ENCODE measurements at regions of chr9 and their contacts with region 1.

Region 1: DNA sequence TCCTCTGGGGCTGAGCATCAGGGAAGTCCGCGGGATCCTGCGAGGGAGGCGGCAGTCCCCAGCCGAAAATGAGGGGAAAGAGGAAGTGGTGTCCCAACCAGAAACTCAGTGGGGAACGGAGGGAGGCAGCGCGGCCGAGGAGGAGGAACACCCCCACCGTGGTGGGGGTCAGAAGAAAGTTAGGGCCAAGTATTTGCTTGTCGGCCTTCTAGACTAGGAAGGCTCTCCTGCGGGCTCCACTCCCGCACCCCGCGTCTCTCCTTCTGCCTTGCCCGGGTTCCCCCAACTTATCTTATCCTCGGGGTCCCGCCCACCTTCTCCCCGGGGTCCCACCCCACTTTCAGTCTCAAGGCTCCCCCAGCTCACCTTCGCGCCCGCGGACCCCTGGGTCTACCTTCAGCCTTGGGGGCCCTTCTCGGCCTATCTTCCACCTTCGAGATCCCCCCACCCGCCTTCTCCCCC is 557 bp upstream of the PHF2 start:
- DNase-seq: peak in 1 of 2 experiments; percentile 58
- H3K4me3 ChIP-seq: peak overlapping the region; percentile 87
- H3K27ac ChIP-seq: no peak overlapping the region
- H3K4me1 ChIP-seq: peaks cover 14% of the 10 kb centered on the region
- H3K27me3 ChIP-seq: no peaks in the 10 kb centered on the region
- CTCF ChIP-seq: no peak

Region 2: GRCh38 chr9:93020771-93021670 is 554.8 kb before region 1 on chr9:
- CTCF ChIA-PET with region 1: no interaction called
- POLR2A ChIA-PET with region 1: no interaction called
- intact Hi-C with region 1: no loop called
- DNase-seq: no peak
- H3K4me3 ChIP-seq: no peak overlapping the region
- H3K27ac ChIP-seq: no peak overlapping the region
- H3K4me1 ChIP-seq: no peaks in the 10 kb centered on the region
- H3K27me3 ChIP-seq: no peaks in the 10 kb centered on the region
- CTCF ChIP-seq: no peak

Region 3: DNA sequence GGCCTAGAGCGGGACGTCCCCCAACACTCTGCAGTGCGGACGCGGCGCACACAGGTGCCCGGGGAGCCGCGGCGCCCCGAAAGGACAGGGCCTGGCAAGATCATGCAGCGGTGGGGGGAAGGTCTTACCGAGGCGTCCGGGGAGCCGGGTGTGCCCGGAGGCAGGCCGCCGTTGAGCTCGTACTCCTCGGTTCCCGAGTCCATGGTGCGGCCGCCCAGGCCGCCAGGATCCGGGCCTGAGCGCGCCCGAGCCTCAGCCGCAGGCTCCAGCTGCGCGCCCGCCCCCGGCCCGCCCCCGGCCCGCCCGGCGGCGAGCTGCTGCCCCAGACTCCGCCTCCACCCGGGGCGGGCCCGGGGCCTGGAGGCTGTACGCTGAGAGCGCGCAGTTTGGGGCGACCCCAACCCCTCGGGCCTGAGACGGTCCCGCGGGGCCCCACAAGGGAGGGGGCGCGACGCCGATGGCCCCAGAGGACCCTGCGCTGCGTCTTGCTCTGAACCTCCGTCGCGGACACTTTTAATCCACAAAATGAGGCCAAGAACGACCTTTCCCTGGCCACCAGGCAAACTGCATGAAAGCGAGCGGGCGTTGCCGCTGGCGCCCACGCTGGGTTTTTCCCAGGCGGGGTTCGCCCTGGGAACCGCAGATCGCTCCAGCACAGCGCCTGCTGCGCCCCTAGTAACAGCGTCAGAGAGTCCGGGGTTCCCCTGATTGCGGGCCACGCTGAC is 441.6 kb before region 1 on chr9 and contains the start of gene NINJ1:
- CTCF ChIA-PET with region 1: no interaction called
- POLR2A ChIA-PET with region 1: no interaction called
- intact Hi-C with region 1: loop called (anchors 5 kb)
- DNase-seq: peak in 1 of 2 experiments; percentile 76
- H3K4me3 ChIP-seq: peak within 1 kb of the TSS; percentile 88
- H3K27ac ChIP-seq: peak within 1 kb of the TSS; percentile 38
- H3K4me1 ChIP-seq: peaks cover 26% of the 10 kb centered on the region
- H3K27me3 ChIP-seq: no peaks in the 10 kb centered on the region
- CTCF ChIP-seq: no peak
- total RNA-seq, gene NINJ1: 115 TPM in 2 replicates

Region 4: DNA sequence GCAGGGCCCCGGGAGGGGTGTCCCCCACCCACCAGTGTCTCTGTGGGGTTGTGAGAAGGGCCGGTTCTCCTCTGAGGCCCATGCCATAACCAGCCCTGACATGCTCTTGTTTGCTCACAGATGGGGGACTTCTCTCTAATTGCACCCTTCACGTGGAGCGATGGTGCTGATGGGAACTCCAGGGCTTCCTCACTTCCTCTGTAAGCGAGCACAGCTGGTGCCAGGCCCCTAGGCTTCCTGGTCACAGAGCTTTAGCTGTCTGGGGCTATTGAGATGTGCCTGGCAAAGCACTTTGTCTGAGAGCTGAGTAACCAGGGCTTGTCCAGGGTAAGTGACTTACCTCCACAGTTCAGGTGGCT is 36.9 kb after region 1 on chr9:
- CTCF ChIA-PET with region 1: no interaction called
- POLR2A ChIA-PET with region 1: no interaction called
- intact Hi-C with region 1: no loop called
- DNase-seq: no peak
- H3K4me3 ChIP-seq: no peak overlapping the region
- H3K27ac ChIP-seq: no peak overlapping the region
- H3K4me1 ChIP-seq: no peaks in the 10 kb centered on the region
- H3K27me3 ChIP-seq: no peaks in the 10 kb centered on the region
- CTCF ChIP-seq: no peak

Region 5: DNA sequence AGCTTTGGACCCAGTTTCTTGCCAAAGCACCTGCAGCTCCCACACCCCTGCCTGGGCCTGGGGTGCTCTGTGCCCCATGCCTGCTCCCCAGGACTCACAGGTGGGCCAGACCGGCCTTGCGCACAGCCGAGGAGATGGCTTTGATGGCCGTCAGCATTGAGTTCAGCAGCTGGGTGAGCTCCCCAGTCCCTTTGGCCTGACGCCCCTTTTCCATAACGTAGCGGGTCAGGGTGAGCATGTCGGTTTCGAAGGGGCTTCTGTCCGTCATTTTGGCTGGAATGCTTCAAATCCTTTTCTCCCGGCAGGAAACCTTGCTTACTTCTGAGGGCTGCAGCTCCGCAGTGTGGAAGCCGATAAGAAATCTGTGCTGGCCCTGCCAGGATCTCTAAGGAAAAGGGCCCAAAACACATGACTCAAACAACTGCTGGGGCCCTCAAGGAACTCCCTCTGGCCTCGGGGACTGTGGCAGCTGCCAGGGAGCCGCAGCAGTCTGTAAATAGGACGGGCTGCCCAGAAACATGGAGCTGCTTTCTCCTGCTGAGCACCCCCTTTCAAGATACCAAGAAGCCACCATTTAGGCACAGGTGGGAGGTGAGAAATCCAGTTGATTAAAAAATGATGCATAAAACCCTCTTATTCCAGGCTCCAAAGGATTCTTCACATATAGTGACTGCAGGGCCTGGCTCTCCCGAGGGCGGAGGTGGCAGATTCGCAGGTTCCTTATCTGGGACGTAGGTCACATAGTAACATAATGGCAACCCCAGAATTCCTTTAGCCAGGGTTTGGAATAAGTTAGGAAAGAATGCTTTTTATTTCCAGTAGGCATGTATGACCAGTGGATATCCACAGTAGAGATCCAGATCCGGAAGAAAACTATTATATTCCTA is 1017.9 kb after region 1 on chr9 and contains the start of gene FBP2:
- CTCF ChIA-PET with region 1: no interaction called
- POLR2A ChIA-PET with region 1: interaction called, 12 read pairs
- intact Hi-C with region 1: no loop called
- DNase-seq: no peak
- H3K4me3 ChIP-seq: no peak within 1 kb of the TSS
- H3K27ac ChIP-seq: no peak within 1 kb of the TSS
- H3K4me1 ChIP-seq: no peaks in the 10 kb centered on the region
- H3K27me3 ChIP-seq: no peaks in the 10 kb centered on the region
- CTCF ChIP-seq: no peak
- total RNA-seq, gene FBP2: not detected in 2 replicates

Measured in PC-9 (cell line).